ENCODE measurements at regions of chr17 and their contacts with region 1.

Region 1: DNA sequence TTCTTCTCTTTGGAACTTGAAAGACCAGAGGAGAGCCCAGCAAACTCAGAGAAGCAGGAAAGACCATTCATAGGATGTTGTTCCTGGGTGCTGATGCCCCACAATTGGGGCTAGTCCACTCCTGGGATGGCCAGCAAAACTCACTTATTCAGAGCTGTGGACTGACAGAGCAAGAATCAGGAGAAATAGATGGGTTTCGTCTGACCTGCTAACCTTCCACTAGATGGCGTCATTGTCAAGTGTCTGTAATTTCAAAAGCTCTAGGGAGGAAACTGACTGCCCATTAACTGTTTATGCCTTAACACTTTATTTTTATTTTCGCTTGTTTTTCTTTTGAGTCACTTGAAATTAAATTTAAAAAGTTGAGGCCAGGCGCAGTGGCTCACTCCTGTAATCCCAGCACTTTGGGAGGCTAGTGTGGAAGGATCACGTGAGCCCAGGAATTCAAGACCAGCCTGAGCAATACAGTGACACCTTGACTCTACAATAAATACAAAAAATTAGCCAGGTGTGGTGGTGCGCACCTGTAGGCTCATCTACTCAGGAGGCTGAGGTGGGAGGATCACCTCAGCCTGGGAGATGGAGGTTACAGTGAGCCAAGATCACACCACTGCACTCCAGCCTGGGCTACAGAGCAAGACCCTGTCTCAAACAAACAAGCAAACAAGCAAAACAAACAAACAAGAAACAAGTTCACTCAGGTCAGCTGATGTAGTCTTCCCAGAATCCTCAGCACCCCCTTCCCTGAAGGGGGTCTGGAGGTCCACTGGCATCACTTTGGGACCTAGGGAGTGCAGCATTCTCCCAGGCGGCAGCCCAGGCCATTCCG is 28.6 kb upstream of the MILR1 start:
- DNase-seq: no peak
- ATAC-seq: peak; percentile 88
- H3K4me3 Mint-ChIP-seq: no peak overlapping the region
- H3K27ac Mint-ChIP-seq: no peak overlapping the region
- H3K4me1 Mint-ChIP-seq: no peaks in the 10 kb centered on the region
- H3K27me3 Mint-ChIP-seq: no peaks in the 10 kb centered on the region

Region 2: DNA sequence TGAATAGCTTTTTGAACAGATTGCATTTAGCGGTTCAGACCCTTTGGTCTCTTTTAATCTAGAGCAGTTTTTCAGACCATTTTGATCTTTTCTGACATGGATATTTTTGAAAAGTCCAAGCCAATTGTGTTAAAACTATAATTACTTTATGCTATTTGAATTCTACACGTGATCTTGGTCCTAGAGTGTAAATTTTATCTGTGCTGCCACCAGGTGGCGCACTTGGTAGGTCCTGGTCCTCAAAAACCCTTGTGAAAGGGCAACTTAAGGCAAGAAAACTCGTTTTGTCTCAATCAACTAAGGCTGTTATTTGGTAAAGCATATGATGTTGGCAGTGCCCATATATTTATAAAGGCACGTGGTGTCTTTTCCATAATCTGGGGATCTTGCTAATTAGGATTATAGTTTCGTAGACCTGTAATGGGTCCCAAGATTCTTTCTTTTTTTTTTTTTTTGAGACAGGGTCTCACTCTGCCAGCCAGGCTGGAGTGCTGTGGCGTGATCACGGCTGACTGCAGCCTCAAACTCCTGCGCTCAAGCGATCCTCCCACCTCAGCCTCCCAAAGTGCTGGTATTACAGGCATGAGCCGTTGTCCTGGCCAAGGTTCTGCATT is 113.4 kb before region 1 on chr17:
- CTCF ChIA-PET with region 1: interaction called, 169 read pairs
- POLR2A ChIA-PET with region 1: no interaction called
- intact Hi-C with region 1: loop called (anchors 1 kb)
- DNase-seq: peak; percentile 83
- ATAC-seq: peak; percentile 66
- H3K4me3 Mint-ChIP-seq: no peak overlapping the region
- H3K27ac Mint-ChIP-seq: no peak overlapping the region
- H3K4me1 Mint-ChIP-seq: peaks cover 6% of the 10 kb centered on the region
- H3K27me3 Mint-ChIP-seq: no peaks in the 10 kb centered on the region

Region 3: GRCh38 chr17:64406321-64407200 is 13.8 kb before region 1 on chr17:
- CTCF ChIA-PET with region 1: interaction called, 26 read pairs
- POLR2A ChIA-PET with region 1: no interaction called
- intact Hi-C with region 1: no loop called
- DNase-seq: no peak
- ATAC-seq: peak; percentile 16
- H3K4me3 Mint-ChIP-seq: no peak overlapping the region
- H3K27ac Mint-ChIP-seq: no peak overlapping the region
- H3K4me1 Mint-ChIP-seq: peaks cover 6% of the 10 kb centered on the region
- H3K27me3 Mint-ChIP-seq: no peaks in the 10 kb centered on the region

Region 4: GRCh38 chr17:64491034-64491859 is 70.9 kb after region 1 on chr17:
- CTCF ChIA-PET with region 1: interaction called, 145 read pairs
- POLR2A ChIA-PET with region 1: no interaction called
- intact Hi-C with region 1: loop called (anchors 1 kb)
- DNase-seq: peak; percentile 78
- ATAC-seq: peak; percentile 84
- H3K4me3 Mint-ChIP-seq: no peak overlapping the region
- H3K27ac Mint-ChIP-seq: no peak overlapping the region
- H3K4me1 Mint-ChIP-seq: peaks cover 28% of the 10 kb centered on the region
- H3K27me3 Mint-ChIP-seq: no peaks in the 10 kb centered on the region

Region 5: GRCh38 chr17:64608540-64608981 is 188.2 kb after region 1 on chr17:
- CTCF ChIA-PET with region 1: interaction called, 3 read pairs
- POLR2A ChIA-PET with region 1: no interaction called
- intact Hi-C with region 1: loop called in 1 of 2 experiments (anchors 2 kb)
- DNase-seq: no peak
- ATAC-seq: peak; percentile 92
- H3K4me3 Mint-ChIP-seq: peak overlapping the region; percentile 32
- H3K27ac Mint-ChIP-seq: peak overlapping the region; percentile 95
- H3K4me1 Mint-ChIP-seq: peaks cover 43% of the 10 kb centered on the region
- H3K27me3 Mint-ChIP-seq: no peaks in the 10 kb centered on the region

Region 6: DNA sequence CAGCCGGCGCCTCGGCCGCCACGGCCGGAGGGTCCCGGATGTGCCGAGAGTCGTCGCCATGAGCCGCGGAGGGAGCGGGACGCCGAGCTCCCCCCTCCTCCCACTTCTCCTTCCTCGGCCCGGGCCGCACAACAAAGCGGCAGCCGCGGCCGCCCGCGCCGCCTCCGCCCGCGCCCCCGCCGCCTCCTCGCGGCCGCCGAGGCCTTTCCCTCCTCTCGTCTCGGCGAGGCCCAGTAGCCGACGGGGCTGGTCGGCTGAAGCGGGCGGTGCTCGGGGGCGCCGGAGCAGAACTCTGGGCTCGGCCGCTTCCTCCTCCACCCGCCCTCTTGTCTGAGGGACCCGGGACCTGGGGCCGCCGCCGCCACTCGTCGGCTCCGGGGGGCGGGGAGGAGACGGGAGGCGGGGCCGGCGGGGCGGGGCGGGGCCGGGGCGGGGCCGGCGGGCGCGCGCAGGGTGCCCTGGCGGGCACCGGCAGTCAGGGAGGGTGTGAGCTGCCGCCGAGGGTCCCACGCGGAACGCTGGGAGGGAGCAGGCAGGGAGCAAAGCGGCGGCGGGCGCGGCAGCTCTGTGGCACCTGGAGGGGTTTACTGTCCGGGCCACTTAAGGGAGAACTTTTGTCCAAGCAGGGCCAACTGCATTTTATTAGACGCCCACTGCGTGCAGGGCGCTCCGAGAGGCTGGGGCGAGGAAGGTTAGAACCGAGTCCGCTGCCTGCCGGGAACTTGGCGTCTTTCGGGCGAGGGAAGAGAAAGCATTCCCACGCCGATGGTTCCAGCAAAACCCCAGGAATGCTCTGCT is 241.8 kb after region 1 on chr17 and contains the start of gene SMURF2:
- CTCF ChIA-PET with region 1: interaction called, 25 read pairs
- POLR2A ChIA-PET with region 1: no interaction called
- intact Hi-C with region 1: no loop called
- DNase-seq: peak; percentile 89
- ATAC-seq: peak; percentile 82
- H3K4me3 Mint-ChIP-seq: peak within 1 kb of the TSS; percentile 98
- H3K27ac Mint-ChIP-seq: peak within 1 kb of the TSS; percentile 92
- H3K4me1 Mint-ChIP-seq: peaks cover 27% of the 10 kb centered on the region
- H3K27me3 Mint-ChIP-seq: no peaks in the 10 kb centered on the region
- total RNA-seq, gene SMURF2: 13.9 to 15.0 TPM